Thyroid gland (tissue), 4 donors: ENCODE measurements at regions of chr21 and their contacts with region 1.

Region 1: DNA sequence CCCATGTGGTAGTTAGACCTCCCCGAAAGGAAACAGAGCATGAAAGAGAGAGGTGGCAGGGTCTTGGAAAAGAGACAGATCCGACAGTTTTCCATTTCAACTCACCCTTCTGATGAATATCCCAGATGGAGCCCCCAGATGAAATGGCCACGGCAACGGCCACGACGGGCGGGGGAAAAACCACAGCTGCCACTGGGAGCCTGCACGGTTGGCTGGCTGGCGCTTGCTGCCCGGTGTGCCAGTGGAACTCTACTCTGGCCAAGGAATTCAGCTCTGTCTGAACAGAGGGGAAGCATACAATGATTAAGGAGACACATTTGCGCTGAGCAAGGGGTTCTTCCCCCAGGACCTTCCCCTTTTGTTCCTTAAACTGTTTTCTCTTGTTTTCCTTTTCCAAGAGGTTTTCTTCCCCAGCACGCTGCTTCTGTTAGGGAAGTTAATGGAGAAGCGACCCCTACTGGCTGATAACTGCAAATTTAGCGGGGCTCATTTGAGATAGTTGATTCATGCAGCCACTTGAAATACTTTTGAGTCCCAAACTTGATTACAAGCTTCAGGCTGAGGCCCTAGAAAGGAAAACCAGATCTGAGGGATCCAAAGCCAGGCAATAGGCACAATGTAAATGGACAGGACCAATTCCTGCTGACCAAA is 1122.5 kb downstream of the NCAM2 start:
- DNase-seq: no peak
- H3K4me3 ChIP-seq: no peak overlapping the region
- H3K27ac ChIP-seq: no peak overlapping the region
- H3K4me1 ChIP-seq: no peaks in the 10 kb centered on the region
- H3K27me3 ChIP-seq: no peaks in the 10 kb centered on the region
- CTCF ChIP-seq: no peak
- POLR2A ChIP-seq: no peak

Region 2: GRCh38 chr21:22062472-22063139 is 58.1 kb before region 1 on chr21:
- intact Hi-C with region 1: loop called (anchors 10 kb)
- DNase-seq: no peak
- H3K4me3 ChIP-seq: no peak overlapping the region
- H3K27ac ChIP-seq: no peak overlapping the region
- H3K4me1 ChIP-seq: no peaks in the 10 kb centered on the region
- H3K27me3 ChIP-seq: no peaks in the 10 kb centered on the region
- CTCF ChIP-seq: no peak
- POLR2A ChIP-seq: no peak